Activated CD4-positive, alpha-beta memory T cell treated with anti-CD3 and anti-CD28 coated beads for 36 hours (primary cell): ENCODE measurements at regions of chr19 and their contacts with region 1.

Region 1: DNA sequence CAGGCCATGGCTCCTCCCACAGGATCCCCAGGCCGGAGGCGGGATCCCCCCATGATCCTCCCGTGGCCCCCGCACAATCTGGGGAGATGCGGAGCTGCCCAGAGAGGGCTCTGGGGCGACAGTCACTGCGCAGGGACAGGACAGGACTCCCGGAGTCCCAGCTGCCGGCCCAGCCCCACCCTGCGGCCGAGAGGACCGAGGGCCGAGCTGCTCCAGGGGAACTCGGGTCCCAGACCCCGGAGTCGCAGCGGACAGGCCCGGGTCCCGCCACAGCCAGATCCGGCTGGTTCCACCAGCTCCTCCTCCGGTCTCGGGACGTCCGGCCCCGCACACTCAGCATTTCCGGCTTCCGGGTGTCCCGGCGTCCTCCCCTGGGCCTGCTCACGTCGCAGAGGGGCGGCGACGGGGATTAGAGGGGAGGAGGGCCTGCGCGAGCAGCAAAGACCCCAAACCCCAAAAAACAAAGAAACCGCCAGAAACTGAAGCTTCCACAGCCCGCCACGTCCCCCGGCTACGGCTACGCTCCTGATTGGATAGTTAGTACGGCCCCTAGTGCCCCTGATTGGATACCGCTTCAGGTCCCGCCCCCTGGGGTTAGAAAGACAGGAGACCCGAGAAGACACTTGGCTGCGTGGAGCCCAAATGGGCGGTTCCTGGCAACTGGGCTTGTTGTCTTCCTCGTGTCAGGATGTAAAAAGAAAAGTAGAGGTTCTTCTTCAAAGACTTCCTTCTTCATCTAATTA is 21.3 kb upstream of the OR10H1 start:
- DNase-seq: peak; percentile 97
- H3K4me3 Mint-ChIP-seq: peak overlapping the region; percentile 83
- H3K27ac Mint-ChIP-seq: peak overlapping the region; percentile 95
- H3K4me1 Mint-ChIP-seq: peaks cover 21% of the 10 kb centered on the region
- H3K27me3 Mint-ChIP-seq: no peaks in the 10 kb centered on the region

Region 2: GRCh38 chr19:15125232-15126067 is 711.3 kb before region 1 on chr19:
- CTCF ChIA-PET with region 1: no interaction called
- POLR2A ChIA-PET with region 1: no interaction called
- intact Hi-C with region 1: loop called (anchors 1 kb)
- DNase-seq: peak; percentile 99
- H3K4me3 Mint-ChIP-seq: peak overlapping the region; percentile 100
- H3K27ac Mint-ChIP-seq: peak overlapping the region; percentile 99
- H3K4me1 Mint-ChIP-seq: peaks cover 30% of the 10 kb centered on the region
- H3K27me3 Mint-ChIP-seq: no peaks in the 10 kb centered on the region